ENCODE measurements at regions of chr7 and their contacts with region 1.

Region 1: GRCh38 chr7:15720849-15721471 is 34.5 kb upstream of the MEOX2 start:
- DNase-seq: peak; percentile 21
- ATAC-seq: no peak
- H3K4me3 Mint-ChIP-seq: no peak overlapping the region
- H3K27ac Mint-ChIP-seq: no peak overlapping the region
- H3K4me1 Mint-ChIP-seq: no peaks in the 10 kb centered on the region
- H3K27me3 Mint-ChIP-seq: no peaks in the 10 kb centered on the region

Region 2: DNA sequence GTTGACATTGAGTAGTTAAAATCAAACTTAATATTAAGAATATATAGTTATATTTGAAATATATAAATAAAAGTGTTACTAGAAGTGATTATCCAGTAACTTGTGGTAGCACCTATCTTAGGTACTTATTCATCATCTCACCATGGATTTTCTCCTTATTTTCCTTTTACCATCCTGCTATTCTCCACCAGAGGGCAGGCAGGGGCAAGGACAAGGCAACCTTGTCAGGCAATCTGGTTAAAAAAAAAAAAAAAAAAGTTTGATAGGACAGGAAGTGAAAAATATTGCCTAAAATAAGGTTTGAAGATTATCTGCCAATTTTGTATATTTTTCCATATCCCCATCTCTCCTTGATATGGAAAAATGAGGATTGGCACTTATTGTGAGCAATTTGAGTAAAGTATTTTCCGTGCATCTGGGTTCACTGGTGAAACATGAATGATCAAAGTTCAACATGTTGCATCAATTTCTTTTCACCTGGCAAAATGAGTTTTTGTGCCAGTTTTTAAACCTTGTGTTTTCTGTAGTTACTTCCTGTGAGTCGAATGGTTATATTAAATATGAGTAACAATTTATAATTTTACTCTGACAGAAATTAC is 415.9 kb before region 1 on chr7:
- CTCF ChIA-PET with region 1: no interaction called
- POLR2A ChIA-PET with region 1: no interaction called
- intact Hi-C with region 1: loop called in 1 of 2 experiments (anchors 2 kb)
- DNase-seq: peak; percentile 25
- ATAC-seq: no peak
- H3K4me3 Mint-ChIP-seq: no peak overlapping the region
- H3K27ac Mint-ChIP-seq: no peak overlapping the region
- H3K4me1 Mint-ChIP-seq: no peaks in the 10 kb centered on the region
- H3K27me3 Mint-ChIP-seq: no peaks in the 10 kb centered on the region

Region 3: GRCh38 chr7:15326044-15326644 is 394.8 kb before region 1 on chr7:
- CTCF ChIA-PET with region 1: no interaction called
- POLR2A ChIA-PET with region 1: no interaction called
- intact Hi-C with region 1: loop called in 1 of 2 experiments (anchors 2 kb)
- DNase-seq: no peak
- ATAC-seq: no peak
- H3K4me3 Mint-ChIP-seq: no peak overlapping the region
- H3K27ac Mint-ChIP-seq: no peak overlapping the region
- H3K4me1 Mint-ChIP-seq: no peaks in the 10 kb centered on the region
- H3K27me3 Mint-ChIP-seq: no peaks in the 10 kb centered on the region

Region 4: GRCh38 chr7:15686295-15686956 is 34.5 kb before region 1 on chr7 and contains the start of gene MEOX2:
- CTCF ChIA-PET with region 1: no interaction called
- POLR2A ChIA-PET with region 1: no interaction called
- intact Hi-C with region 1: no loop called
- DNase-seq: no peak
- ATAC-seq: no peak
- H3K4me3 Mint-ChIP-seq: no peak within 1 kb of the TSS
- H3K27ac Mint-ChIP-seq: no peak within 1 kb of the TSS
- H3K4me1 Mint-ChIP-seq: no peaks in the 10 kb centered on the region
- H3K27me3 Mint-ChIP-seq: peaks cover 41% of the 10 kb centered on the region
- total RNA-seq, gene MEOX2: not detected

Region 5: GRCh38 chr7:15905251-15906040 is 184.5 kb after region 1 on chr7:
- CTCF ChIA-PET with region 1: no interaction called
- POLR2A ChIA-PET with region 1: no interaction called
- intact Hi-C with region 1: no loop called
- DNase-seq: no peak
- ATAC-seq: no peak
- H3K4me3 Mint-ChIP-seq: no peak overlapping the region
- H3K27ac Mint-ChIP-seq: no peak overlapping the region
- H3K4me1 Mint-ChIP-seq: no peaks in the 10 kb centered on the region
- H3K27me3 Mint-ChIP-seq: no peaks in the 10 kb centered on the region